Tibial artery (tissue), 4 donors: ENCODE measurements at regions of chr5 and their contacts with region 1.

Region 1: GRCh38 chr5:17204133-17204489 is 13.3 kb upstream of the BASP1 start:
- DNase-seq: no peak
- H3K4me3 ChIP-seq: no peak overlapping the region
- H3K27ac ChIP-seq: no peak overlapping the region
- H3K4me1 ChIP-seq: peaks cover 0 to 5% (median 1%) of the 10 kb centered on the region in 4 donors
- H3K27me3 ChIP-seq: peaks cover 0 to 28% of the 10 kb centered on the region in 2 donors
- CTCF ChIP-seq: no peak

Region 2: GRCh38 chr5:16489322-16489791 is 714.8 kb before region 1 on chr5:
- intact Hi-C with region 1: loop called (anchors 10 kb)
- DNase-seq: no peak
- H3K4me3 ChIP-seq: no peak overlapping the region
- H3K27ac ChIP-seq: no peak overlapping the region
- H3K4me1 ChIP-seq: no peaks in the 10 kb centered on the region
- H3K27me3 ChIP-seq: no peaks in the 10 kb centered on the region
- CTCF ChIP-seq: peak; percentile 65 to 77

Region 3: DNA sequence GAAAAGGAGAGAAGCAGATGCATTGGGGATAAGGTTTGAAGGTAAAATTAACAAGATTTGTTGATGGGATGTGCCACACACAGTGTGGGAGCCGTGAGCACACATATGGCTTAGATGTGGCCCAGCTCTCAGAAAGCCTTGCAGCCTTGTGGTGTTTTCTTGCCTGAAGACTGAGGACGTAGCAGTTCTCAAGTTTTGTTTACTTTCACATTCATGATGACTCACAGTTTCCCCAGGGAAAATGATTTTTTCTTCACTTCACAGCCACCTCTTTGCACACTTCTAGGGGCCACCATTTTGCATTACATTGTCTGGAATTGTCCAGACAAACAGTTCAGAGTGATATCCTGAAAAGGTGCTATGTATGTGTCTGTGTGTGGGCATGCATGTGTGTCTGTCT is 139.6 kb after region 1 on chr5:
- intact Hi-C with region 1: no loop called
- DNase-seq: no peak
- H3K4me3 ChIP-seq: no peak overlapping the region
- H3K27ac ChIP-seq: no peak overlapping the region
- H3K4me1 ChIP-seq: peaks cover 0 to 10% (median 2%) of the 10 kb centered on the region in 4 donors
- H3K27me3 ChIP-seq: no peaks in the 10 kb centered on the region
- CTCF ChIP-seq: no peak